Transverse colon (tissue), 4 donors: ENCODE measurements at regions of chr3 and their contacts with region 1.

Region 1: GRCh38 chr3:131026321-131027178 is at the starts of genes ASTE1 and NEK11:
- DNase-seq: peak; percentile 93
- H3K4me3 ChIP-seq: peak within 1 kb of the TSS; percentile 48 to 71 (median 56)
- H3K27ac ChIP-seq: peak within 1 kb of the TSS; percentile 91 to 93 (median 91)
- H3K4me1 ChIP-seq: peaks cover 17 to 51% (median 20%) of the 10 kb centered on the region in 4 donors
- H3K27me3 ChIP-seq: no peaks in the 10 kb centered on the region
- CTCF ChIP-seq: no peak
- EP300 ChIP-seq: no peak
- POLR2A ChIP-seq: peak; percentile 84
- total RNA-seq, gene ASTE1: 3.0 to 16.4 (median 7.7) TPM
- total RNA-seq, gene NEK11: 4.6 to 12.3 (median 8.5) TPM

Region 2: GRCh38 chr3:131381444-131382291 is 355.1 kb after region 1 on chr3 and contains the start of gene NUDT16:
- in situ Hi-C with region 1: loop called in 1 of 4 experiments (anchors 25 kb)
- intact Hi-C with region 1: no loop called
- DNase-seq: peak; percentile 100
- H3K4me3 ChIP-seq: peak within 1 kb of the TSS; percentile 63 to 96 (median 82)
- H3K27ac ChIP-seq: peak within 1 kb of the TSS; percentile 87 to 95 (median 93)
- H3K4me1 ChIP-seq: peaks cover 23 to 62% (median 39%) of the 10 kb centered on the region in 4 donors
- H3K27me3 ChIP-seq: no peaks in the 10 kb centered on the region
- CTCF ChIP-seq: peak in 1 of 5 experiments; percentile 19
- EP300 ChIP-seq: no peak
- POLR2A ChIP-seq: peak; percentile 97
- total RNA-seq, gene NUDT16: 45.6 to 57.9 (median 49.1) TPM

Region 3: DNA sequence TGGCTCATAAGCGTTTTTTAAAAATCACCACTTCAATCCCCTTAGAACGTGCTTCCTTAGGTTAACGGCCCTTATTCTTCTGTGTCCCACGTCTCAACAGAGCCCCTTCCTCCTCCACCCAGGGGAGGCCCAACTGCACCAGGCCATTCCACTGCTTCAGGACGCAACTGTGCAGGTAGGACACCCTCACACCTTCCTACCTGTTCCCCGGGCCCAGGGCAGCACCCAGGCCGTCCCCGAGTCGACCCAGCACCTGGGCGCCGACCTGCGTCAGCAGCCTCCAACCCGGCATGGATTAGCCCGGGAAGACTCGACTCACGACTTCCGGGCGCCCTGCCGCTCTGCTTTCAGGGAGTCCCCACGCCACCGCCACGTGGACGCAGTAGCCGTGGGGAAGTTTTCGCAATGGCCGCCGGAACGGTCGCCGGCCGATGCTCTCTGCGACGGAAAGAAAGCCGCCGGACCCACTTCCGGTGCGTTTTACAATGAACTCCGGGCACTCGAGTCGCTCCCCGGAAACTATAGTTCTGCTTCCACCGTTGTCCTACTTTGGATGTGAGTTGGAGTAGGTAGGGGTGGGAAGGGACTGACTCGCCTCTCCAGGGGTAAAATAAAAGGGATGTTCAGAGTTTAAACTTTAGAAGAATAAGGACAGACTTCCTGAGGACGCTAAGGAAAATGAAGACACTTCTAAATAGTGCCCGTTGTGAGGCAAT is 476.1 kb after region 1 on chr3 and contains the start of gene MRPL3:
- in situ Hi-C with region 1: loop called in 1 of 4 experiments (anchors 25 kb)
- intact Hi-C with region 1: no loop called
- DNase-seq: peak; percentile 89
- H3K4me3 ChIP-seq: peak within 1 kb of the TSS; percentile 74 to 95 (median 88)
- H3K27ac ChIP-seq: peak within 1 kb of the TSS; percentile 79 to 87 (median 84)
- H3K4me1 ChIP-seq: peaks cover 13 to 24% (median 17%) of the 10 kb centered on the region in 4 donors
- H3K27me3 ChIP-seq: no peaks in the 10 kb centered on the region
- CTCF ChIP-seq: no peak
- EP300 ChIP-seq: no peak
- POLR2A ChIP-seq: peak; percentile 52
- total RNA-seq, gene MRPL3: 23.9 to 64.3 (median 37.4) TPM